Left lung (tissue), 14 donors: ENCODE measurements at regions of chr15 and their contacts with region 1.

Region 1: GRCh38 chr15:70679919-70680231 is 83.5 kb downstream of the UACA start:
- DNase-seq: no peak
- ATAC-seq: no peak
- H3K4me3 ChIP-seq: no peak overlapping the region
- H3K27ac ChIP-seq: no peak overlapping the region
- H3K4me1 ChIP-seq: no peaks in the 10 kb centered on the region
- H3K27me3 ChIP-seq: peaks cover 0 to 13% of the 10 kb centered on the region in 2 donors
- CTCF ChIP-seq: no peak

Region 2: DNA sequence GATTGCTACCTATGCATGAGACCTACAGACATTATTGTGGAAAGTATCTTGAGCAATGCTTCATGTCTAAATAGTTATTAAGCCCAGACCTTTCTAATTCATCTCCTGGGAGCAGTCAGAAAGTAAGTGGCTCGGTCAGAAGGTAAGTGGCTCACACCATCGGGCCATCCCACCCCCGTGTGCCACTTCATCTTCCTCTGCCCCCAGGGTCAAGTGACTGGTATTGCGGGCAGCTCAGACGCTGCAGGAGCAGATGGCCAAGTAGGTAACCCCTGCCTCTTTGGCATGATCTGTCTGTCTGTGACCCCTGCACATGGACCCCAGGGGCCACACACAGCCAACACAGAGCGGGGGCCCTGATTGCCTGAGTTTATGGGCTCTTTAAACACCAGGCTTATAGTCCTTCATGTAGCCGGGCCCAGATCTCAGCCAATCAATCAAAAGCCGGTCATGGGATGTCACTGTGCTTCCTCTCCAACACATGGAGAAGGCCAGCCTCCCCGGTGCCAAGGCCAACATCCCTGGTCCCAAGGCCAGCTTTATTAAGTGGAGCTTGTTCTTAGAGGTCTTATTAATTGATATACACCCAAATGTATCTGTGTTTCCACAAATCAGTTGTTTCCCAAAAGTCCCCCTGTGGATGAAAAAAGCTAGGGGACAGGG is 131.2 kb after region 1 on chr15:
- intact Hi-C with region 1: loop called in 1 of 2 experiments (anchors 5 kb)
- DNase-seq: no peak
- ATAC-seq: no peak
- H3K4me3 ChIP-seq: no peak overlapping the region
- H3K27ac ChIP-seq: no peak overlapping the region
- H3K4me1 ChIP-seq: peaks cover 0 to 14% of the 10 kb centered on the region in 2 donors
- H3K27me3 ChIP-seq: peaks cover 0 to 52% of the 10 kb centered on the region in 2 donors
- CTCF ChIP-seq: no peak

Region 3: GRCh38 chr15:70955151-70955550 is 275.3 kb after region 1 on chr15:
- intact Hi-C with region 1: no loop called
- DNase-seq: no peak
- ATAC-seq: no peak
- H3K4me3 ChIP-seq: no peak overlapping the region
- H3K27ac ChIP-seq: no peak overlapping the region
- H3K4me1 ChIP-seq: no peaks in the 10 kb centered on the region
- H3K27me3 ChIP-seq: no peaks in the 10 kb centered on the region
- CTCF ChIP-seq: no peak